Lower leg skin (tissue), 4 donors: ENCODE measurements at regions of chr15 and their contacts with region 1.

Region 1: GRCh38 chr15:31051496-31052080 is 49.9 kb downstream of the TRPM1 start:
- DNase-seq: no peak
- H3K4me3 ChIP-seq: no peak overlapping the region
- CTCF ChIP-seq: no peak
- POLR2A ChIP-seq: no peak

Region 2: DNA sequence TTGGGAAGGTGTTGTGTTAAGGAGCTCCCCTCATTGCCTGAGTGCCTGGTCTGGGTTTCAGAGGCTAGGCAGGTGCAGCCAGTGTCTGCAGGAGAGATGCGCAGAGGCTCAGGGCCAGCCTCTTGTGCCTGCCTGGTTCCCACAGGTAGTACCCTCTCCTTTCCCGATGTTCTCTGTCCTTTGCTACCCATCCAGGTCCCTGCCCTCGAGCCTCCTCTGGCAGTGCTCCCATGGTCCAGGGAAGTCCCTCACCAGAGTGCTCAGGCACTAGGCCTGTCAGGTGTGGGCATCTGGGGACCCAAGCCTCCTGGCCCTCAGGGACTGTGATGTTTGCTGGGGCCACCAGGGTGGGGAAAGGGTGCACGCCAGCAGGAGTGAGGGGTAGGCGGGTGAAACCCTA is 45.0 kb after region 1 on chr15:
- intact Hi-C with region 1: loop called (anchors 1 kb)
- DNase-seq: peak in 1 of 2 donors; percentile 75
- H3K4me3 ChIP-seq: no peak overlapping the region
- CTCF ChIP-seq: no peak
- POLR2A ChIP-seq: no peak